Right ventricle myocardium inferior (tissue), 1 donor: ENCODE measurements at regions of chr6 and their contacts with region 1.

Region 1: GRCh38 chr6:90478789-90479602 is 107.9 kb downstream of the MAP3K7 start:
- DNase-seq: peak; percentile 87
- ATAC-seq: peak; percentile 99

Region 2: GRCh38 chr6:89940225-89941027 is 538.6 kb before region 1 on chr6:
- intact Hi-C with region 1: loop called (anchors 1 kb)
- DNase-seq: no peak
- ATAC-seq: peak; percentile 80

Region 3: GRCh38 chr6:89984926-89985750 is 493.9 kb before region 1 on chr6:
- intact Hi-C with region 1: no loop called
- DNase-seq: peak; percentile 82
- ATAC-seq: peak; percentile 85

Region 4: DNA sequence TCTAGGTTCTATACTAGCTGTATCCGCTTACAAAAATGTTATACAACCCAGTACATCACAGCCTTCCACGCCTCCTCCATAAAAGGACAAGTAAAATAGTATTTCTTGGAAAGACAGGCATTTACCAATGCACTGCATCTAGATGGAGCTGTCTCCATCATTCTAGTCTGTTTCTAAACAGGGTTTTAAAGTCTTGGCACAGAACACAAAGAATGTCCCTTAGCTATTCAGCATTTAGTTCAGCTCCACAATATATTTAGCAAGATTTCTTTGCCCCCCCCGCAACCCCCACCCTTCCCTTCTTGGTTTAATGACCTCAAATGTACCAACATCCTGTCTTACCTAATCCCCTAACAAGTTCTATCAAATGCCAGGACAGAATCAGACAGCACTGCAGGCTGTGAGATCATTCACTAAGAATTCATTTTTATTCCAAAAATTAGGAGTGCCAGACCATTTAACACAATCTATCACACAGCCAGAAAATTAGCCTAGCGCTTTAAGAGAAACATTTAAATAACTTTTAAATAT is 380.9 kb before region 1 on chr6:
- intact Hi-C with region 1: loop called (anchors 5 kb)
- DNase-seq: no peak
- ATAC-seq: peak; percentile 92

Region 5: DNA sequence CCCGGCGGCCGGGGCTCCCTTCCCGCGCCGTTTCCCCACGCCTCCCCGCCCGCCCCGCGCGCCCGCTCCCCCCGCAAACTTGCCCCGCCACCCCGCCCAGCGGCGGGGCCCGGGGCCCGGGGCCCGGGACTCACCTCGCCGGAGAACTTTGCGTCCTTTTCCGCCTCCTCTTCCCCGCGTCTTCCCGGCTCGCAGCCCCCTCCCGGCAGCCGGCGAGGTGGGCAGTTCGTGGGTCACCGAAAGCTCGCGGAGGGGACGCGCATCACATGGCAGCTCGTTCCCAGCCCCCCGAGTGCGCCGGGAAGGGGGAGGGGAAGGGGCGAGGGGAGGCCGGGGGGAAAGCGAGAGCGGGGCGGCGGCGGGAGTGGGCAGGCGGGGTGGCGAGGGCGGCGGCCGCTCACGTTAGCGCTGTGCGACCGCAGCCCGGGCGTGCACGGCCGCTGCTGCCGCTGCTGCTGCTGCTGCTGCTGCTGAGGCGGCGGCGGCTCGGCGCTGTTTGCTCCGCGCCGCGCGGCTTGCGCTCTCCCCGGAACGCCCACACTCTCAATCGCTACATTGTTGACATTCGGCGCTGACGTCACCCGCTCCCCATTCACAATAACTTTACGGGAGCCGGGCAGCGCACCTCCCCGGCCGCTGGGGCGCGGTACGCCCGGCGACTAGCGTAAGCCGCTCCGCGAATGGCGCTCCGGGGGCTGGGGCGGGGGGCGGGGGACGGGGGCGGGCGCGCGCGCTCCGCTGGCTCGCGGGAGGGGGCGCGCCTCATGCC is 182.5 kb before region 1 on chr6 and contains the start of gene BACH2:
- intact Hi-C with region 1: loop called (anchors 5 kb)
- DNase-seq: peak; percentile 94
- ATAC-seq: peak; percentile 77
- total RNA-seq, gene BACH2: 2.2 TPM

Region 6: DNA sequence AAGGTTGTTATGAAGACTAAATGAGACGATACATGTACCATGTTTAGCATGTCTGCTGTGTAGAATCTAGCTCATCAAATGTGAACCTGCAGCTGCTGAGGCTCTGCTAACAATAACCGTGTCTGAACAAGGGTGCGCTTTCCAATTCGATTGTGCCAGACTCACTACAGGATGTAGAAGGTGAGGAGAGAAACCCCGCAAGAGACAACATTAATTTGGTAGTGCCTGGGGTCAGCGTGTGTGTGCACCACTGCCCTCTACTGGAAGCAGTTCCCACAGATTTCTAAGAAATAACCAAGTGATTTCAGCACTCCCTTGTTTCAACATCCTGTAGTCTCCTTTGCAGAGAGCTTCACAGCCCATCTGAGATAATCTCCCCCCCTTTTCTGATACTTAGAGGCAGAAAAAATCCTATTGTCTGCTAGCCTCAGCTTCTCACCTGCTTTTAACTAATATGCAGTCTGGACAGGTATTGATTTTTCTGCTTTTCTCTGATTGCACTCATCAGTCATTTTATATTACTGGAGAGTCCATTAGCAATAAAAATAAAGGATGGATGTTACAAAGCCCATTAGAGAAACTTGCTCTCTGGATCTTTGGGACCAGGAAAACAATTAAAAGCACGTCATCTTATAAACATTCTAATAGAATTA is 85.6 kb before region 1 on chr6:
- intact Hi-C with region 1: loop called (anchors 5 kb)
- DNase-seq: no peak
- ATAC-seq: peak; percentile 72